Uterus (tissue), 4 donors: ENCODE measurements at regions of chr19 and their contacts with region 1.

Region 1: GRCh38 chr19:15323496-15324227 is 8.7 kb downstream of the BRD4 start:
- DNase-seq: peak; percentile 29 to 38
- H3K4me3 ChIP-seq: no peak overlapping the region
- H3K27ac ChIP-seq: peak overlapping the region; percentile 17 to 68
- H3K4me1 ChIP-seq: peaks cover 13 to 50% of the 10 kb centered on the region in 2 donors
- H3K27me3 ChIP-seq: no peaks in the 10 kb centered on the region
- CTCF ChIP-seq: no peak
- POLR2A ChIP-seq: no peak

Region 2: GRCh38 chr19:15264061-15264932 is 59.4 kb before region 1 on chr19:
- intact Hi-C with region 1: loop called (anchors 10 kb)
- DNase-seq: peak; percentile 81 to 82
- H3K4me3 ChIP-seq: no peak overlapping the region
- H3K27ac ChIP-seq: peak overlapping the region; percentile 50 to 54
- H3K4me1 ChIP-seq: peaks cover 8 to 28% of the 10 kb centered on the region in 2 donors
- H3K27me3 ChIP-seq: no peaks in the 10 kb centered on the region
- CTCF ChIP-seq: peak; percentile 74 to 80 (median 78)
- POLR2A ChIP-seq: no peak